ENCODE measurements at regions of chr20 and their contacts with region 1.

Region 1: GRCh38 chr20:45406259-45407066 is 1.6 kb upstream of the DBNDD2 start:
- DNase-seq: peak; percentile 94

Region 2: GRCh38 chr20:45373353-45374100 is 32.9 kb before region 1 on chr20:
- intact Hi-C with region 1: loop called (anchors 2 to 5 kb)
- DNase-seq: peak; percentile 96